Natural killer cell (primary cell): ENCODE measurements at regions of chr17 and their contacts with region 1.

Region 1: DNA sequence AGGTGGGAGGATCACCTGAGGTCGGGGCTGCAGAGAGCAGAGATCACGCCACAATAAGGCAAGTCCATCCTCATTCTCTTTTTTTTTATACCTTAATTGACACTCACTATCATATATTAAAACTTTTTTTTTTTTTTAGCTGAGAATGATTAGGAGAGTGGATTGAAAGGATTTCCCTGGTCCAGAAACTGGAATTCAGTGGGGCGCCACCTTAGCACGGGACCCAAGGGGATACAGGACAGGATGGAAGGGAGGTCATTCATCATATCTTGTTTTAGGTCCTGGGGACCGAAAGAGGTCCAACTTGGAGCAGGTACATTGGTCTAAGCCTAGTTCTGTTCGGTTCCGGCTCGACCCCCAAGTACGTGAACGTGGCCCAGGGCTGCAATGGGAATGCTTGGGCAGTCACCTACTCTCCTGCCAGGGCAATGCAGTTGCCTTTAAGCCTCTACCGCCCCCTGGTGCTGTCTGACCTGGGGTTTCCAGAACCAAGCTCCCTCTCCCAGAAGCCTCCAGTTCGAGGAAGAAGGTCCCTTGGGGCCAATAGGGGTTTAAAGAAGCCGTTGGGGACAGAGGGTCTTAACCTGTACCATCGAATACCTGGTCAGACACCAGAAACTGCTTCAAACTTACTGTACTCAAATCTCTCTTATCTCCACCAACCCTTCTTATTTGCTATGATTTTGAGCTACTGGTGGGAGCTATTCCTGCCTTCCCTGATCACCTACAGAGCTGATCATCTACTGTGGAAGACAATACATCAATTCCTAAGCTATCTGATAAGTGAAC is 19.9 kb upstream of the GPATCH8 start:
- DNase-seq: peak; percentile 52 to 69
- ATAC-seq: peak; percentile 62 to 99 (median 95)
- H3K4me3 ChIP-seq: no peak overlapping the region
- H3K4me3 Mint-ChIP-seq: no peak overlapping the region
- H3K27ac ChIP-seq: no peak overlapping the region
- H3K27ac Mint-ChIP-seq: no peak overlapping the region
- H3K4me1 ChIP-seq: no peaks in the 10 kb centered on the region
- H3K4me1 Mint-ChIP-seq: no peaks in the 10 kb centered on the region
- H3K27me3 ChIP-seq: no peaks in the 10 kb centered on the region
- H3K27me3 Mint-ChIP-seq: peaks cover 0 to 10% of the 10 kb centered on the region in 2 donors
- CTCF ChIP-seq: peak; percentile 74

Region 2: DNA sequence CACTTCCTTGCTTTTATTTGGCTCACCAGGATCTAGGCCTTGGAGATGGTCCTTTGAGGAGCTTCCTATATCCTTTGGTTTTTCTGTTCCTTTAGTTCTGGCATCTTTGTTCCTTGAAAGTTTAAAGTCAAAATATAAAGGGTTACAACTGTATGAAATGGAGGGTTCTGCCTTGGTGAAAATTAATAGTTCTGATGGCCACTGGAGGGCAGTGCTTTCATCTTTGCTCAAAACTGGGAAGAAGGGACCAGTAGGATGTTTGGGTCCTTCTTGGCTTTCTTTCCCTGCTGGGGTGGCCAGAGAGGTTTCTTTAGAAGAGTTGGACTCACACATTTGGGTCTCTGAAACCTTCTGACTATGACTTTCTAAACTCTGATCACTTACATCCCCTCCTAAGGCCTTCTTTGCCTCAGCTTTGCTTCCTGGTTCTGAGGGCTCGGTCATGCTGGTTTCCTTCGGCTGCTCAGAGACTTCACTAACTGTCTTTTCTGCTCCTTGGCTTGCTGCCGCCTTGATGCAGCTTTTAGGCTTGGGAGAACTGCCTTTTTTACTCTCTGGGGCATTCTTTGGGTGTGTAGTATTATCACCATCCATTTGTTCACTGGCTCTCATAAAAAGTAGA is 122.7 kb before region 1 on chr17:
- intact Hi-C with region 1: loop called (anchors 1 kb)
- DNase-seq: no peak
- ATAC-seq: peak; percentile 50 to 77 (median 74)
- H3K4me3 ChIP-seq: no peak overlapping the region
- H3K4me3 Mint-ChIP-seq: no peak overlapping the region
- H3K27ac ChIP-seq: peak overlapping the region; percentile 26
- H3K27ac Mint-ChIP-seq: peak overlapping the region; percentile 76 to 79
- H3K4me1 ChIP-seq: no peaks in the 10 kb centered on the region
- H3K4me1 Mint-ChIP-seq: peaks cover 11 to 13% of the 10 kb centered on the region in 2 donors
- H3K27me3 ChIP-seq: no peaks in the 10 kb centered on the region
- H3K27me3 Mint-ChIP-seq: no peaks in the 10 kb centered on the region
- CTCF ChIP-seq: peak; percentile 60

Region 3: GRCh38 chr17:44432254-44433157 is 90.6 kb before region 1 on chr17:
- intact Hi-C with region 1: no loop called
- DNase-seq: no peak
- ATAC-seq: no peak
- H3K4me3 ChIP-seq: no peak overlapping the region
- H3K4me3 Mint-ChIP-seq: no peak overlapping the region
- H3K27ac ChIP-seq: no peak overlapping the region
- H3K27ac Mint-ChIP-seq: peak overlapping the region; percentile 33 to 35
- H3K4me1 ChIP-seq: no peaks in the 10 kb centered on the region
- H3K4me1 Mint-ChIP-seq: peaks cover 23 to 36% of the 10 kb centered on the region in 2 donors
- H3K27me3 ChIP-seq: no peaks in the 10 kb centered on the region
- H3K27me3 Mint-ChIP-seq: no peaks in the 10 kb centered on the region
- CTCF ChIP-seq: no peak

Region 4: GRCh38 chr17:44473367-44473766 is 49.7 kb before region 1 on chr17:
- intact Hi-C with region 1: no loop called
- DNase-seq: no peak
- ATAC-seq: no peak
- H3K4me3 ChIP-seq: no peak overlapping the region
- H3K4me3 Mint-ChIP-seq: no peak overlapping the region
- H3K27ac ChIP-seq: no peak overlapping the region
- H3K27ac Mint-ChIP-seq: no peak overlapping the region
- H3K4me1 ChIP-seq: peaks cover under 1% of the 10 kb centered on the region
- H3K4me1 Mint-ChIP-seq: peaks cover 21 to 32% of the 10 kb centered on the region in 2 donors
- H3K27me3 ChIP-seq: no peaks in the 10 kb centered on the region
- H3K27me3 Mint-ChIP-seq: no peaks in the 10 kb centered on the region
- CTCF ChIP-seq: no peak